ENCODE measurements at regions of chr16 and their contacts with region 1.

Region 1: GRCh38 chr16:66516808-66517585 is 32.9 kb downstream of the TK2 start:
- DNase-seq: peak; percentile 94 to 99
- H3K4me3 ChIP-seq: peak overlapping the region; percentile 20 to 36
- H3K27ac ChIP-seq: peak overlapping the region; percentile 98 to 99
- H3K4me1 ChIP-seq: peaks cover 26 to 63% of the 10 kb centered on the region in 2 donors
- H3K27me3 ChIP-seq: no peaks in the 10 kb centered on the region
- CTCF ChIP-seq: no peak

Region 2: DNA sequence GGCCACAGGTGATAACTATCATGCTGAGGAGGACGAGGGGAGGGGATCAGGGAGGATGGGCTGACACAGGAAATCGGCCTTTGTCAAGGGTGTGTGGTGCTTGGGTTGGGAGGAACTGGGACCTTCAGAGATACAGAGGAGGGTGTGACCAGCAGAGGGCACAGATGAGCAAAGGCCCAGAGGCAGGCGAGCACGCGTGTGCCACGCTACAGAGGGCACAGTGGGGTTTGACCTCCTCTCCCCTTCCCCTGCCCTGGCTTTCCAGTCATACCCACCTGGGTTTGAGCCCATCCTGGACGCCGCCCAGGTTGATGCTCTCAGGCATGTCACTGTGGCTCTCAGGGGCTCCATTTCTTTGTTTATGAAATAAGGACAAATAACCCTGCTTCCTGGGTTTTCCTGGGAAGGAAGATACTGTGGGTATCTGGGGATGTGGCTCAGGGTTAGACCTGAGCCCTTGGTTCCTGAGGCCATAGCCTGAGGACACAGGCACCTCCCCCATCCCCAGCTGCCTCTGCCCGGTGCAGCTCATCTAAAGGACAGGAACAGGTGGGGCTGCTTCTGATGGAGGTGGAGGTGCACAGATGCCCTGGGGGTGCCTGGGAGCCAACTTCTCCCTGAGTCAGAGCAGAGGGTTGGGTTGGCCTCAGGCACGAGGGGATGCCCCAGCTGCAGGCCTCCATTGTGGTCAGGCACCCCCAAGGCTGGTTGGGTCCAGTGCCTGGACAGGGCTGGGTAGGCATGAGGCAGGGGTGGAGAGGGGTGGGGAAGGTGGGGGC is 38.1 kb before region 1 on chr16:
- intact Hi-C with region 1: no loop called
- DNase-seq: peak in 1 of 2 donors; percentile 84
- H3K4me3 ChIP-seq: no peak overlapping the region
- H3K27ac ChIP-seq: no peak overlapping the region
- H3K4me1 ChIP-seq: no peaks in the 10 kb centered on the region
- H3K27me3 ChIP-seq: no peaks in the 10 kb centered on the region
- CTCF ChIP-seq: peak; percentile 71 to 78 (median 73)

Region 3: DNA sequence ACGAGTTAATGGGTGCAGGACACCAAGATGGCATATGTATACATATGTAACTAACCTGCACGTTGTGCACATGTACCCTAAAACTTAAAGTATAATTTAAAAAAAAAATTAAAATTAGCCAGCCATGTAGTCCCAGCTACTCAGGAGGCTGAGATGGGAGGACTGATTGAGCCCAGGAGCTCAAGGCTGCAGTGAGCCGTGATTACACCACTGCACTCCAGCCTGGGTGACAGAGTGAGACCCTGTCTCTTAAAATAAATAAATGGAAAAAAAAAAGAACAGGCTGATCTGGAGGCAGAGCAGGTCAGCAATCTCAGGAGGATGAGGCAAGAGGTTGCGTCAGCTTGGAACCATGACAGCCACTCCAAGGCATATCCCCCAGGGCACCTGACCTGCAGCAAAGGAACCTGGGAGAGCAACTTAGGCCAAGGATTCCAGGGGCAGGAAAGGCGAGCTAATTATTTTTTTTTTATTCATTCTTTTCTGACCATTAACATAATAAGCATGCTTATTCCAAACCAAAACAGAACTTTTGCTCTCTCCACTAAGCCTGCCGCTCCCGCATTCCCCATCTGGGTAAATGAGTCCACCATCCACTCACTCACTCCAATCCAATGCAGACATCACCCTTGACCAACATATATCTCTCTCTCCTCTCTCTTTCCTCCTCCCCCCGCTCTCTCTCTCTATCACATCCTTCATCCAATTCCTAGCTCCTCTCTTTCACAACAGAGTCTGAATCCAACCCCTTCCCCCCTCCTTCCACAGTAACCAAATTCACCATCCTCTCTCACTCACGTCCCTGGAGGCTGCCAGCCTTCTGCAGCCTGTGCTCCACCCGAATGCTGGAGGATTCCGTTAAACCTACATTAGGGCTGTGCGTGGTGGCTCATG is 14.7 kb before region 1 on chr16:
- intact Hi-C with region 1: loop called (anchors 2 kb)
- DNase-seq: peak in 1 of 2 donors; percentile 89
- H3K4me3 ChIP-seq: peak overlapping the region; percentile 21 to 39
- H3K27ac ChIP-seq: peak overlapping the region; percentile 76 to 78
- H3K4me1 ChIP-seq: peaks cover 7 to 23% of the 10 kb centered on the region in 2 donors
- H3K27me3 ChIP-seq: no peaks in the 10 kb centered on the region
- CTCF ChIP-seq: no peak

Region 4: DNA sequence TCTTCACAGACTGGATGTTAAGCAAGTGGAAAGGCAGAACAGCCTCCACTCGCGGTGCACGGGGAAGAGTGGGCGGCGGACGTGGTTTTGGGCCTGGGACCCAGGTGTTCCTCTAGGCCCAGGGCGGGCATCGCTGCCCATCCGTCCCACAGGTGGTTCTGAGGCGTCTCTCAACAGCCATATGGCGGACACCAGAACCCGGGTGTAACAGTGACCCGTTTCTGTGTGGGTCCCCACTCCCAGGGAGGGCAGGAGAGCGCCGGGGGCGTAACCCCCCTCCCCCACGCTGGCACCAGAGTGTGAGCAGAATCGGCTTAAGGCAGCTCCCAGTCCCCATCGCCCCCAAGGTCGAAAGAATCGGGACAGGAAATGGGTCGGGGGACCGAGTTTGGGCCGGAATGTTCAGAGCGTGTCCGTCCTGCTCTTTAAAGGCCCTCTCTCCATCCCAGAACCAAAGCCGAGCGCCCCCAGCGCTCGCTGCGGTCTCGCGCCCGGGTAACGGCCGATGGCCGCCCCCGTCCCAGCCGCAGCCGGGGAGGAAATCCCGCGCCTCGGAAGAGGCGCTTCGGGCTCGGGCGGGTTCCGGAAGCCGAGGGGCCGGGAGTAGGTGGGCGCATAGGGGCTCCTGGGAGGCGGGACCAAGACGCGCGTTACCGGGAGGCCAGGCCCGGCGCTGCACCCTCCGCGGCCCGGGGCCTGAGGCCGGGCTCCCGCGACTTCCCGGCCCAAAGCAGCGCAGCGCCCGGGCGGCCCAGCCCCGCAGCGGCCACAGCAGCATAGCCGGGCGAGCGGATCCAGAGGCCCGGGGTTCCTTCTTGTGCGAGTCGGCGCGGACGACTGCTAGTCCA is 32.5 kb after region 1 on chr16 and contains the start of gene TK2:
- intact Hi-C with region 1: loop called (anchors 1 kb)
- DNase-seq: peak in 1 of 2 donors; percentile 85
- H3K4me3 ChIP-seq: peak within 1 kb of the TSS; percentile 90 to 98
- H3K27ac ChIP-seq: peak within 1 kb of the TSS; percentile 94 to 99
- H3K4me1 ChIP-seq: peaks cover 11 to 24% of the 10 kb centered on the region in 2 donors
- H3K27me3 ChIP-seq: no peaks in the 10 kb centered on the region
- CTCF ChIP-seq: peak in 2 of 3 experiments; percentile 15 to 25
- total RNA-seq, gene TK2: 21.5 TPM

Region 5: DNA sequence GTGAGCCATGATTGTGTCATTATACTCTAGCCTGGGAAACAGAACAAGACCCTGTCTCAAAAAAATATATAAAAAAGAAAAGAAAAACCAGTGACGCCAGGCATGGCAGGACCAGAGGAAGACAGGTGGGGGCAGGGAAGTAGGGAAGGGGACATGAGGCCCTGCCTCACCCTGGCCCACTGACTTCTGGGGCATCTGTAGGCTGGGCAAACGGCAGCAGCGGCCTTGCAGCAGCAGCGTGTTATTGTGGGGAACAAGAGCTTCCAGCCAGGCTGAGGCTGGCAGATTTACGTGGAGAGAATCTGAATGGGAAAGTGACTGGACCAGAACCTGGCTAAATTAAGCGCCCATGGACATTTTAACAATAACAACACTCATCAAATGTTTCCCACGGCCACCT is 160.2 kb after region 1 on chr16:
- intact Hi-C with region 1: no loop called
- DNase-seq: no peak
- H3K4me3 ChIP-seq: no peak overlapping the region
- H3K27ac ChIP-seq: no peak overlapping the region
- H3K4me1 ChIP-seq: no peaks in the 10 kb centered on the region
- H3K27me3 ChIP-seq: no peaks in the 10 kb centered on the region
- CTCF ChIP-seq: no peak

Measured in ascending aorta (tissue), 2 donors.